ENCODE measurements at regions of chr21 and their contacts with region 1.

Region 1: DNA sequence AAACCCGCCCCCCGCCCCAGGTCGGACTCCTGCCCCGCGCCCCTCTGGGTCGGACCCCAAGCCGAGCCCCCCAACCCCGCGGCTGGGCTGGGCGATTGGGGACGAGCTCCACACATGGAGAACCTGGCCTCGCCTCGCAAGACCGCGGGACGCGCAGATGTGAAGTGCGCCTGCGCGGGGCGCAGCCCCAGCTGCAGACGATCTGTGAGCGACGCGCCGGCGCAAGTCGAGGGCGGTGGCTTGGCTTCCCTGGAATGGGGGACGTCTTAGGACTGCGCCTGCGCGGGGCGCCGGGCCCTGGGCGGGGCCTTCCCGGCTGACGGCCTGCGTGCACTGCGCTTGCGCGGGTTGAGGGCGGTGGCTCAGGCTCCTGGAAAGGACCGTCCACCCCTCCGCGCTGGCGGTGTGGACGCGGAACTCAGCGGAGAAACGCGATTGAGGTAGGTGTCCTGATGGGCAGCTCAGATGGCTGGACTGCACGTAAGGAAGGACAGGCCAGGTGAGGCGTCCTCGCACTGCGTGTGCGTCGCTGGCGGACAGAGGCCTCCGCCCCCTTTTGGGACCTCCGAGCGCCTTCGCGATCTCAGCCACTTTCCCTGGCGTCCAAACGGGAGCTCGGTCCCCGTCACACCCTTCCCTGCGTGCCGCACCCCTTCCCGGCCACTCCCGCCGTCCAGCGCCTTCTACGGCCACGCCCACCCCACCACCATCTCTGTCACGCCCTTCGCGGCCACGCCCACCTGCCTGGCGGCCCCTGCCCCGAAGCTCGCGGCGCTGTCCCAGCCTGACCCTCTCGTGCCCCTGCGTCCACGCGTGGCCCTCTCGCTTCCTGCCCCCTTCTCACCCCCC is at the start of gene PRMT2:
- DNase-seq: peak; percentile 96 to 99 (median 99)
- ATAC-seq: peak; percentile 91
- H3K4me3 ChIP-seq: peak within 1 kb of the TSS; percentile 99
- H3K4me3 Mint-ChIP-seq: peak within 1 kb of the TSS; percentile 85 to 99 (median 98)
- H3K27ac ChIP-seq: peak within 1 kb of the TSS; percentile 93
- H3K27ac Mint-ChIP-seq: peak within 1 kb of the TSS; percentile 89 to 100 (median 97)
- H3K4me1 ChIP-seq: peaks cover 47 to 48% of the 10 kb centered on the region in 2 donors
- H3K4me1 Mint-ChIP-seq: peaks cover 53 to 85% (median 75%) of the 10 kb centered on the region in 7 donors
- H3K27me3 ChIP-seq: no peaks in the 10 kb centered on the region
- H3K27me3 Mint-ChIP-seq: peaks cover 0 to 4% (median 0%) of the 10 kb centered on the region in 5 donors
- total RNA-seq, gene PRMT2: 125 to 268 (median 177) TPM

Region 2: GRCh38 chr21:46307625-46308024 is 327.9 kb before region 1 on chr21:
- CTCF ChIA-PET with region 1: no interaction called
- POLR2A ChIA-PET with region 1: no interaction called
- intact Hi-C with region 1: no loop called
- DNase-seq: no peak
- ATAC-seq: peak; percentile 82
- H3K4me3 ChIP-seq: no peak overlapping the region
- H3K4me3 Mint-ChIP-seq: no peak overlapping the region
- H3K27ac ChIP-seq: no peak overlapping the region
- H3K27ac Mint-ChIP-seq: no peak overlapping the region
- H3K4me1 ChIP-seq: no peaks in the 10 kb centered on the region
- H3K4me1 Mint-ChIP-seq: peaks cover 0 to 6% (median 0%) of the 10 kb centered on the region in 7 donors
- H3K27me3 ChIP-seq: no peaks in the 10 kb centered on the region
- H3K27me3 Mint-ChIP-seq: no peaks in the 10 kb centered on the region

Region 3: GRCh38 chr21:46458315-46459023 is 177.1 kb before region 1 on chr21 and contains the start of gene DIP2A:
- CTCF ChIA-PET with region 1: interaction called, 4 read pairs
- POLR2A ChIA-PET with region 1: interaction called, 6 read pairs
- intact Hi-C with region 1: loop called in 1 of 2 experiments (anchors 1 kb)
- DNase-seq: peak; percentile 93 to 97 (median 96)
- ATAC-seq: peak; percentile 98
- H3K4me3 ChIP-seq: peak within 1 kb of the TSS; percentile 81
- H3K4me3 Mint-ChIP-seq: peak within 1 kb of the TSS; percentile 86 to 96 (median 92)
- H3K27ac ChIP-seq: peak within 1 kb of the TSS; percentile 94
- H3K27ac Mint-ChIP-seq: peak within 1 kb of the TSS; percentile 85 to 97 (median 91)
- H3K4me1 ChIP-seq: peaks cover 4 to 17% of the 10 kb centered on the region in 2 donors
- H3K4me1 Mint-ChIP-seq: peaks cover 28 to 62% (median 48%) of the 10 kb centered on the region in 7 donors
- H3K27me3 ChIP-seq: no peaks in the 10 kb centered on the region
- H3K27me3 Mint-ChIP-seq: no peaks in the 10 kb centered on the region
- total RNA-seq, gene DIP2A: 54.7 to 118 (median 108) TPM

Region 4: DNA sequence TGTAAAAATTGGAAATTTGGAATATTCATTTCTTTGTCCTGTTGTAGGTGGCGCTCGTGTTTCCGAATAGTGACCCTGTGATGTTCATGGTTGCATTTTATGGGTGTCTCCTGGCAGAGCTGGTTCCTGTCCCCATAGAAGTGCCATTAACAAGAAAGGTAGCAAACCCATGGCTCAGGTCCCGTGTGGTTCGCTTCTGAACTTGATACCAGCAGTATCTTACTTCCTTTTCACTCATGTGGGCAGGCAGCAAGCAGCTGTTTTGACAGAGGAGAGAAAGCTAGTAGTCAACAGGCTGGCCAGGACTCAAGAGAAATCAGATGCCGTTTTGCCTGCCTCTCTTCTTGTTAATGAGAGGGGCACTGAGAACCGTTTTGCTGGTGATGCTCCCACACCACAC is 103.5 kb before region 1 on chr21:
- CTCF ChIA-PET with region 1: interaction called, 12 read pairs
- POLR2A ChIA-PET with region 1: interaction called, 27 read pairs
- intact Hi-C with region 1: loop called in 1 of 2 experiments (anchors 1 kb)
- DNase-seq: peak in 6 of 9 donors; percentile 44 to 69 (median 54)
- ATAC-seq: peak; percentile 74
- H3K4me3 ChIP-seq: no peak overlapping the region
- H3K4me3 Mint-ChIP-seq: peak overlapping the region in 7 of 10 donors; percentile 41 to 77 (median 63)
- H3K27ac ChIP-seq: peak overlapping the region; percentile 32
- H3K27ac Mint-ChIP-seq: peak overlapping the region; percentile 42 to 97 (median 91)
- H3K4me1 ChIP-seq: peaks cover 0 to 14% of the 10 kb centered on the region in 2 donors
- H3K4me1 Mint-ChIP-seq: peaks cover 7 to 69% (median 62%) of the 10 kb centered on the region in 7 donors
- H3K27me3 ChIP-seq: no peaks in the 10 kb centered on the region
- H3K27me3 Mint-ChIP-seq: no peaks in the 10 kb centered on the region

Region 5: DNA sequence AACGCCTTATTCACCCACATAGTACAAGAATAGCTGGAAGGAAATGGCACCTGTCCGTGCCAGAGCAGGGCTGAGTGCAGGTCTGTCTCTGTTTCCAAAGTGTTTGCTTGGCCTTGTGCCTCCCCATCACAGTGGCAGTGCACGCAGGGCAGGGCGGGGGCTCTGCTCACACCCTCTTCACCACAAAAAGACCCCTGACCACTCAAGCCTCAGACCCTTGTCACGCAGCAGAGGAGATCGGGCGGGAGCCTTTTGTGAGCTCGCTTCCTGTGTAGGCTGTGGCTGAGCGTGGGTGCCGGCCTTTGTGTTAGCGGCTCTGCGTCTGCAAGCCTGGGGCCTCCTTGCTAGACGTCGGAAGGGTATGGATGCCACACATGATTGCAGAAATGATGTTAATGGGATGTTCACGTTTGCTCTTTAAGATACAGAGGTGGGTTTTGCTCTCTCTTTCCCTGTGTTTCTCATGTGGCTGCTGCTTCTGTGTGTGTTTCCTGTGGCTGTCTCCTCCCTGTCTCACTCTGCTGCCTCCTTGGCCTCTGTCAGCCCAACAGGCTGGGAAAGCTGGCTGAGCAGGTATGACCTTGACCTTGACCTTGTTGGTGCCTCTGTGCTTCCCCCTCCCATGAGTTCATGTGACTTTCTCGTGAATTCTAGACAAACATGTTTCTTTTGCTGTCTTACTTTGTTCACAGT is 76.1 kb before region 1 on chr21:
- CTCF ChIA-PET with region 1: interaction called, 6 read pairs
- POLR2A ChIA-PET with region 1: interaction called, 219 read pairs
- intact Hi-C with region 1: loop called (anchors 1 to 2 kb)
- DNase-seq: peak; percentile 29 to 85 (median 76)
- ATAC-seq: peak; percentile 85
- H3K4me3 ChIP-seq: peak overlapping the region; percentile 24
- H3K4me3 Mint-ChIP-seq: peak overlapping the region; percentile 76 to 91 (median 82)
- H3K27ac ChIP-seq: peak overlapping the region; percentile 84
- H3K27ac Mint-ChIP-seq: peak overlapping the region; percentile 95 to 99 (median 97)
- H3K4me1 ChIP-seq: peaks cover 37 to 85% of the 10 kb centered on the region in 2 donors
- H3K4me1 Mint-ChIP-seq: peaks cover 39 to 95% (median 78%) of the 10 kb centered on the region in 7 donors
- H3K27me3 ChIP-seq: no peaks in the 10 kb centered on the region
- H3K27me3 Mint-ChIP-seq: no peaks in the 10 kb centered on the region

Region 6: GRCh38 chr21:46594276-46594675 is 41.3 kb before region 1 on chr21:
- CTCF ChIA-PET with region 1: no interaction called
- POLR2A ChIA-PET with region 1: interaction called, 11 read pairs
- intact Hi-C with region 1: no loop called
- DNase-seq: no peak
- ATAC-seq: no peak
- H3K4me3 ChIP-seq: no peak overlapping the region
- H3K4me3 Mint-ChIP-seq: no peak overlapping the region
- H3K27ac ChIP-seq: no peak overlapping the region
- H3K27ac Mint-ChIP-seq: peak overlapping the region in 1 of 9 donors; percentile 70
- H3K4me1 ChIP-seq: peaks cover 0 to 8% of the 10 kb centered on the region in 2 donors
- H3K4me1 Mint-ChIP-seq: peaks cover 2 to 33% (median 9%) of the 10 kb centered on the region in 7 donors
- H3K27me3 ChIP-seq: no peaks in the 10 kb centered on the region
- H3K27me3 Mint-ChIP-seq: peaks cover 0 to 6% (median 0%) of the 10 kb centered on the region in 5 donors

Region 7: DNA sequence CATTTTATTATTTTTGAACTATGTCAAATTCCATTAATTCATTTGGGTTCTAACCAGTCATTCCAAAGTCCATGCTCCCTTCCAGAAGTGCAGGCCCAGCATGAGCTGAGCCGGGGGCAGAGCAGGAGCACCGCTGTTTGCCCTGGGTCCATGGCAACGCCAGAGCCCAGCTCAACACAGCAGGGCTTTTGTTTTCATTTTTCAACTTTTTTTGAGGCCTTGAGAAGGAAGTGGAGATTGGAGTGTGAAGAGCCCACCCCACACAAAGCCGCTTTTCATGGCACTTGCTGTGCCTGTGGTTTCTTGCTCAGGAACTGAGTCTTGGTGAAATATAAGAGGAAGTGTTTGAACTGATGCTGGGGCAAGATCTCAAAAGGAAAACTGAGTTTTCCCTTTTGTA is 13.3 kb before region 1 on chr21:
- CTCF ChIA-PET with region 1: interaction called, 5 read pairs
- POLR2A ChIA-PET with region 1: interaction called, 128 read pairs
- intact Hi-C with region 1: loop called (anchors 1 kb)
- DNase-seq: peak in 7 of 9 donors; percentile 50 to 86 (median 74)
- ATAC-seq: peak; percentile 87
- H3K4me3 ChIP-seq: peak overlapping the region; percentile 14
- H3K4me3 Mint-ChIP-seq: peak overlapping the region; percentile 62 to 82 (median 76)
- H3K27ac ChIP-seq: peak overlapping the region; percentile 80
- H3K27ac Mint-ChIP-seq: peak overlapping the region; percentile 93 to 98 (median 97)
- H3K4me1 ChIP-seq: peaks cover 35 to 67% of the 10 kb centered on the region in 2 donors
- H3K4me1 Mint-ChIP-seq: peaks cover 45 to 84% (median 73%) of the 10 kb centered on the region in 7 donors
- H3K27me3 ChIP-seq: no peaks in the 10 kb centered on the region
- H3K27me3 Mint-ChIP-seq: peaks cover 0 to 2% (median 0%) of the 10 kb centered on the region in 5 donors

Measured in naive thymus-derived CD4-positive, alpha-beta T cell (primary cell).